A549 (cell line): ENCODE measurements at regions of chr2 and their contacts with region 1.

Region 1: DNA sequence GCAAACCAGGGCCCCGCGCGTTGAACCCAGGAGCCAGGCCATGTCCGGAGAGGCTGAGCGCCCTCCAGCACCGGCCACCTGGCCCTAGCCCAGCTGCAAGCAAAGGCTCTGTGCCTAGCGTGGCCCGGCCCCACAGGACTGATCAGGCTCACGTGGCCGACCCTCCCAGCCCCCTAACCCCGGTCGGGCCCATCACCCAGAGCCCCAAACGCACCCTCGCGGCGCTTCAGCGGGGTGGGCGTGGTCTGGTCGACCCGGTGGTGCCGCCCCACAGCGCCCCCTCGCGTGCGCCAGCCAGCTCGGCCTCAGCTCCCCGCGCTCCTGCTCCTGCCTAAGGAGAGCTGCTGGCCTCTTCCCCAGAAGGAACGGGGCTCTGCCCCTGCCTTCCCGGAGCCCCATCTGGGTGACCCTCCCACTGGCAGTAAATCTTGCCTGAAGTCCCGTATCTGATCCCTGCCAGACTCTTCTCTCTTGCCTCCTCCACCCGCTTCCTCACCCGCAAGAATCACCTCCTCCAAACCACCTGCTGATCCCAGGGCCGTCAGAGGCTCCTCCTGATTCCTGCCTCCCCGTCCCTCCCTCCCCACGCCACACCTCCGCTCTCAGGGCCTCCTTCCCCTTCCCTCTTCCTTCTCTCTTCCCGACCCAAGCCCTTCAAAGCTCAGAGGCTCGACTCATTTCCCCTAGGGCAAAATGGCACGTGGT is 12.3 kb upstream of the TEX51 start:
- DNase-seq: peak; percentile 65 to 74
- ATAC-seq: peak; percentile 82 to 97
- H3K4me3 ChIP-seq: peak overlapping the region; percentile 36
- H3K27ac ChIP-seq: peak overlapping the region; percentile 27 to 67; a peak in 4 of 6 replicates
- H3K4me1 ChIP-seq: no peaks in the 10 kb centered on the region
- CTCF ChIP-seq: peak; percentile 77
- EP300 ChIP-seq: no peak
- POLR2A ChIP-seq: no peak
- RAD21 ChIP-seq: peak; percentile 28 to 40; a peak in 2 of 5 replicates

Region 2: GRCh38 chr2:126850940-126851339 is 35.4 kb before region 1 on chr2:
- CTCF ChIA-PET with region 1: interaction called, 13 read pairs
- POLR2A ChIA-PET with region 1: no interaction called
- DNase-seq: no peak
- ATAC-seq: no peak
- H3K4me3 ChIP-seq: no peak overlapping the region
- H3K27ac ChIP-seq: no peak overlapping the region
- H3K4me1 ChIP-seq: no peaks in the 10 kb centered on the region
- CTCF ChIP-seq: no peak
- EP300 ChIP-seq: no peak
- POLR2A ChIP-seq: no peak
- RAD21 ChIP-seq: no peak

Region 3: GRCh38 chr2:126935774-126936173 is 49.4 kb after region 1 on chr2:
- CTCF ChIA-PET with region 1: no interaction called
- POLR2A ChIA-PET with region 1: no interaction called
- DNase-seq: no peak
- ATAC-seq: no peak
- H3K4me3 ChIP-seq: no peak overlapping the region
- H3K27ac ChIP-seq: no peak overlapping the region
- H3K4me1 ChIP-seq: no peaks in the 10 kb centered on the region
- CTCF ChIP-seq: no peak
- EP300 ChIP-seq: no peak
- POLR2A ChIP-seq: no peak
- RAD21 ChIP-seq: no peak